ENCODE measurements at regions of chr4 and their contacts with region 1.

Region 1: GRCh38 chr4:25379591-25379990 is 2.5 kb downstream of the ANAPC4 start:
- DNase-seq: no peak
- H3K4me3 Mint-ChIP-seq: no peak overlapping the region
- H3K27ac Mint-ChIP-seq: no peak overlapping the region
- H3K4me1 Mint-ChIP-seq: no peaks in the 10 kb centered on the region
- H3K27me3 Mint-ChIP-seq: no peaks in the 10 kb centered on the region
- CTCF ChIP-seq: no peak

Region 2: GRCh38 chr4:23805450-23805851 is 1574.1 kb before region 1 on chr4:
- CTCF ChIA-PET with region 1: no interaction called
- POLR2A ChIA-PET with region 1: no interaction called
- intact Hi-C with region 1: loop called (anchors 10 kb)
- DNase-seq: peak; percentile 31
- H3K4me3 Mint-ChIP-seq: no peak overlapping the region
- H3K27ac Mint-ChIP-seq: no peak overlapping the region
- H3K4me1 Mint-ChIP-seq: no peaks in the 10 kb centered on the region
- H3K27me3 Mint-ChIP-seq: no peaks in the 10 kb centered on the region
- CTCF ChIP-seq: no peak

Measured in MCF 10A (cell line).